Panc1 (cell line): ENCODE measurements at regions of chr3 and their contacts with region 1.

Region 1: DNA sequence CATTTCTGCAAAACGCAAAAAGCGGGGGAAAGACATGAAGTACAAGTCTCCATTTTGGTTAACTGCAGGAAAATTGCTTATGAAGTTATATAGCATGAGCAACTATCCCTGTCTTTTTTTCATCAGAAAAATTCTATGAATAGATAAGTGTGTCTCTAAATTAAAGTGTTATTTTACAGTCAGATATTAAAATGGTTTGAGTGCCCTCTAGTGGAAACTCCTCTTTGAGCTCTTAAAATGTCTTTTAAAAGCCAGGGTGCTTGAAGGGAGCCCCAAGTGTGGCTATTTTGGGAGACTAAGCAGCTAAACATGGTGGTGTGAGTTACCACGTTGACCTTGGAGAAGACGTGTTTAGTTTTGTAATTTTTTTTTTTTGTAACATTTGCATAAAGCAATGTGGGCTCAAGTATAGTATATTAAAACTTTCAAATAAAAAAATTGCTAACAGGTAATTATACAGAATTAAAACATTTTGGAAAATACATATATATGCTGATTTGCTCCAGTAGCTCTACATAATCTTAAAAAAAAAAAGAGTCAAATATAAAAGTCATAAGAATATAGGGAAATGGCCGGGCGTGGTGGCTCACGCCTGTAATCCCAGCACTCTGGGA is 77.2 kb downstream of the PPP2R3A start:
- DNase-seq: peak; percentile 15
- ATAC-seq: no peak
- H3K4me3 ChIP-seq: no peak overlapping the region
- H3K27ac ChIP-seq: no peak overlapping the region
- H3K4me1 ChIP-seq: no peaks in the 10 kb centered on the region
- H3K27me3 ChIP-seq: no peaks in the 10 kb centered on the region
- CTCF ChIP-seq: peak; percentile 77; the same call in 1 of the 2 replicates

Region 2: DNA sequence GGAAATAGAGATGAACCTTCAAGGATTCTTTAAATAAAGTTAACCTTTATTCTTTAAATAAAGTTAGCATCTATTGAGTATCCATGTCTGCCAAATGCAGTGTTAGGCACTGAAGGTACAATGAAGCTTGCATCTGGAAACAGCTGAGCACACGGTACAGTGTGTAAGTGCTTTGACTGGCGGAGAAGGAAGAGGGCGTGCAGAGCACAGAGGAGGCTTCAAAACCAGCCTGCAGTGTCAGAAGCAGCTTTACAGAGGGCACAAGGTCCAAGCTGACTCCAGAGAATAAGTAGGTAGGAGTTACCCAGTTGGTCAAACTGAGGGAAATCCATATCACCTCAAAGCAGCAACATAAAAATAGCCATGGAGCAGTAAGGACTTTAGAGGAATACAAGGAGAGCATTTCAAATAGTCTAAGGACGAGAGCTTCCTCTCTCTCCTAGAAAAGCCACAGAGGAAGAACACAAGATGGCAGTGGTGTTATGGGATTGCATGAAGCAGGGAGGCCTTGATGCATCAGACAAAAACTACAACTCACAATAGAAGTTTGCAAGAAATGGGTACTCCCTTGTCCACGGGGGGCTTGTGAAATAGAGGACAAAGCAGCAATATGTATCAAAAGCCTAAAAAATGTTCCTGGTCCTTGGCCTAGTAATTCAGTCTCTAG is 137.5 kb before region 1 on chr3:
- CTCF ChIA-PET with region 1: interaction called, 14 read pairs
- POLR2A ChIA-PET with region 1: no interaction called
- in situ Hi-C with region 1: no loop called
- intact Hi-C with region 1: no loop called
- DNase-seq: no peak
- ATAC-seq: peak; percentile 63; the same call in 1 of the 2 replicates
- H3K4me3 ChIP-seq: no peak overlapping the region
- H3K27ac ChIP-seq: no peak overlapping the region
- H3K4me1 ChIP-seq: no peaks in the 10 kb centered on the region
- H3K27me3 ChIP-seq: 0 out of 2 replicates have a peak, but pooled peaks cover 4% of the 10 kb centered on the region
- CTCF ChIP-seq: peak; percentile 45

Region 3: DNA sequence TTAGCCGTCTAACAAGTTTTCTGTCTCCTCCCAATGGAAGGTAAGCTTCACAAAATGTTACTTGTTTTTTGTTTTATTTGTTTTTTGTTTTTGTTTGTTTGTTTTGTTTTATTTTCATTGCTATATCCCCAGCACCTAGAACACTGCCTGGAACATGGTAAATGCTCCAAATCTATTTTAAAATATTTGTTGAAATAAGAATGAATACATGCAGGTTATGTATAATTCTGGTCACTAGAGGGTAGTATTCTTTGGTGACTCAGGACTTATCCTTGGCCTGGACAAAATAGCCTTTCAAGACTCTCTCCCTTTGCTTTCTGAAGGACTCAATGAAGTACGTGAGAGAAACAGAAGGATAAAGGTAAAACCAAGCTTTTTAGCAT is 124.1 kb before region 1 on chr3:
- CTCF ChIA-PET with region 1: no interaction called
- POLR2A ChIA-PET with region 1: interaction called, 3 read pairs
- in situ Hi-C with region 1: no loop called
- intact Hi-C with region 1: loop called (anchors 1 kb)
- DNase-seq: no peak
- ATAC-seq: peak; percentile 73
- H3K4me3 ChIP-seq: no peak overlapping the region
- H3K27ac ChIP-seq: no peak overlapping the region
- H3K4me1 ChIP-seq: no peaks in the 10 kb centered on the region
- H3K27me3 ChIP-seq: no peaks in the 10 kb centered on the region
- CTCF ChIP-seq: peak; percentile 60; the same call in 1 of the 2 replicates